Activated naive CD4-positive, alpha-beta T cell treated with anti-CD3 and anti-CD28 coated beads for 36 hours (primary cell): ENCODE measurements at regions of chrX and their contacts with region 1.

Region 1: GRCh38 chrX:15930585-15930984 is 76.0 kb upstream of the AP1S2 start:
- DNase-seq: no peak
- H3K4me3 Mint-ChIP-seq: no peak overlapping the region
- H3K27ac Mint-ChIP-seq: no peak overlapping the region
- H3K4me1 Mint-ChIP-seq: no peaks in the 10 kb centered on the region
- H3K27me3 Mint-ChIP-seq: peaks cover 13% of the 10 kb centered on the region

Region 2: DNA sequence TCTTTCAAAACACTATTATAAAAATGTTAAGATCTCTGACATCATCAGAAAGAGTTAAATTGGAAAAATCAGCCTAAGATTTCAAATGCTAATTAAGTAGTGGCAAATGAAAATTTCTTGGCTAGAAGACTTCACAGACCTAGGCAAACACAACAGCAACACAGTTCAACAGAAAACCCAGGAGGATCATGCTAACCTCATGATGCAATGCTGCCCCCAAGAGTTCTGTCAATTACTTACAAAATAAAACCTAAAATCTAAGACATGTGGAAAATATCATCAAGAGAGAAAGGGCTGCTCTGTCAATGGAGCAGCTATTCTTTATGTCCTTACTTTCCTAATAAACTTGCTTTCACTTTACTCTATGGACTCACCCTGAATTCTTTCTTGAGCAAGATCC is 740.4 kb after region 1 on chrX:
- CTCF ChIA-PET with region 1: no interaction called
- intact Hi-C with region 1: loop called (anchors 2 kb)
- DNase-seq: peak; percentile 45
- H3K4me3 Mint-ChIP-seq: no peak overlapping the region
- H3K27ac Mint-ChIP-seq: no peak overlapping the region
- H3K4me1 Mint-ChIP-seq: no peaks in the 10 kb centered on the region
- H3K27me3 Mint-ChIP-seq: no peaks in the 10 kb centered on the region